ENCODE measurements at regions of chr16 and their contacts with region 1.

Region 1: GRCh38 chr16:57091975-57092785 is at the start of gene CPNE2:
- DNase-seq: peak; percentile 66 to 78
- ATAC-seq: peak; percentile 76 to 93 (median 88)
- H3K4me3 ChIP-seq: peak within 1 kb of the TSS; percentile 47 to 97 (median 83)
- H3K27ac ChIP-seq: peak within 1 kb of the TSS; percentile 77 to 93 (median 90)
- H3K4me1 ChIP-seq: peaks cover 10 to 39% (median 30%) of the 10 kb centered on the region in 9 donors
- H3K27me3 ChIP-seq: no peaks in the 10 kb centered on the region
- CTCF ChIP-seq: peak in 1 of 9 donors; percentile 12
- total RNA-seq, gene CPNE2: 6.5 to 18.0 (median 10.7) TPM

Region 2: DNA sequence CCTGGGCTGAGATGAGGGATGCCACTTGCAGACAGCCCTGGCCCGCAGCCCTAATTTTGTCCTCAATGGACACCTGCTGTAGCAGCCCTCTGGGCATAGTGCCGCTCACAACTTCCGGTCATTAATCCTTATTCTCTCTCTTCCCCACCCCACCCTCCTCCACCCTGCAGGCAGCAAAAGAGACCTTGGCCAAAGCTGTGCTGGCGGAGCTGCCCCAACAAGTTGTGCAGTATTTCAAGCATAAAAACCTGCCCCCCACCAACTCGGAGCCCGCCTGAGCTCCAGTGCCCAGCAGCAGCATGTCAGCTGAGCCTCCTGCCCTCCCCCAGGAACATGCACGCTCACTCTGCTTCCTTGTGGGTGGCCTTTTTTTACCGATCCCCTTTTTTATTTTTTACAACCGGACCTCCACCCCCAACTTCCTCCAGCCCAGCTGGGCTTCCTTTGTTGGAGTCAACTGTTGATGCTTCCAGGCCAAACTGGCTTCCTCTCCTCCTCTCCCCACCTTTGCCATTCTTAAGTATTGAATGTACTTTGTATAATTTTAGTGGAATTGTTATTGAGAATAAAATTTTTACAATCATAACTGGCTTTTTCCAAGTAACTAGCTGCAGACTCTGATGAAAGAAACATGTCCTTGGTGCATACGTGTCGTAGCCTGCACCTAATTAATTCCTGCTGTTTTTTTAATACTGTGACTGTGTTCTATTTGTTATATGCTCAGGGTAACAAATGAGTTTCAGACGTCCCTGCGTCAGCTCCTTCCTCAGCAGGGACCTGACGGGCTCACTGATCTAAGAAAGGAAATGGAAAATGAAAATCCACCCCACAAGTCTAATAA is 55.4 kb after region 1 on chr16:
- intact Hi-C with region 1: loop called in 4 of 10 experiments (anchors 1 to 10 kb)
- DNase-seq: peak in 1 of 2 donors; percentile 61
- ATAC-seq: peak in 7 of 8 donors; percentile 19 to 69 (median 64)
- H3K4me3 ChIP-seq: peak overlapping the region in 2 of 10 donors; percentile 7 to 19
- H3K27ac ChIP-seq: peak overlapping the region in 9 of 10 donors; percentile 66 to 85 (median 78)
- H3K4me1 ChIP-seq: peaks cover 14 to 94% (median 68%) of the 10 kb centered on the region in 9 donors
- H3K27me3 ChIP-seq: no peaks in the 10 kb centered on the region
- CTCF ChIP-seq: no peak

Region 3: GRCh38 chr16:57167953-57168352 is 75.8 kb after region 1 on chr16:
- intact Hi-C with region 1: loop called in 4 of 10 experiments (anchors 2 to 5 kb)
- DNase-seq: no peak
- ATAC-seq: peak; percentile 65 to 91 (median 80)
- H3K4me3 ChIP-seq: no peak overlapping the region
- H3K27ac ChIP-seq: peak overlapping the region in 1 of 10 donors; percentile 66
- H3K4me1 ChIP-seq: peaks cover 0 to 28% (median 20%) of the 10 kb centered on the region in 9 donors
- H3K27me3 ChIP-seq: no peaks in the 10 kb centered on the region
- CTCF ChIP-seq: peak; percentile 51 to 81 (median 65)

Region 4: GRCh38 chr16:57213462-57213861 is 121.3 kb after region 1 on chr16:
- intact Hi-C with region 1: no loop called
- DNase-seq: no peak
- ATAC-seq: no peak
- H3K4me3 ChIP-seq: no peak overlapping the region
- H3K27ac ChIP-seq: no peak overlapping the region
- H3K4me1 ChIP-seq: no peaks in the 10 kb centered on the region
- H3K27me3 ChIP-seq: no peaks in the 10 kb centered on the region
- CTCF ChIP-seq: no peak